ENCODE measurements at regions of chr10 and their contacts with region 1.

Region 1: GRCh38 chr10:100009793-100010676 is at the start of gene DNMBP:
- DNase-seq: peak; percentile 89 to 94 (median 91)
- ATAC-seq: peak; percentile 80 to 96 (median 94)
- H3K4me3 ChIP-seq: peak within 1 kb of the TSS; percentile 62 to 99 (median 84)
- H3K27ac ChIP-seq: peak within 1 kb of the TSS; percentile 55 to 92 (median 84)
- H3K4me1 ChIP-seq: peaks cover 0 to 52% (median 32%) of the 10 kb centered on the region in 12 donors
- H3K27me3 ChIP-seq: no peaks in the 10 kb centered on the region
- CTCF ChIP-seq: peak; percentile 28 to 68 (median 55)
- POLR2A ChIP-seq: peak in 1 of 2 donors; percentile 48
- total RNA-seq, gene DNMBP: 3.9 to 11.5 (median 7.2) TPM

Region 2: GRCh38 chr10:99854860-99855259 is 155.2 kb before region 1 on chr10:
- intact Hi-C with region 1: loop called in 3 of 10 experiments (anchors 2 to 10 kb)
- DNase-seq: peak in 1 of 5 donors; percentile 20
- ATAC-seq: peak in 3 of 4 donors; percentile 62 to 75 (median 73)
- H3K4me3 ChIP-seq: no peak overlapping the region
- H3K27ac ChIP-seq: no peak overlapping the region
- H3K4me1 ChIP-seq: no peaks in the 10 kb centered on the region
- H3K27me3 ChIP-seq: no peaks in the 10 kb centered on the region
- CTCF ChIP-seq: peak; percentile 5 to 67 (median 48)
- POLR2A ChIP-seq: no peak

Region 3: DNA sequence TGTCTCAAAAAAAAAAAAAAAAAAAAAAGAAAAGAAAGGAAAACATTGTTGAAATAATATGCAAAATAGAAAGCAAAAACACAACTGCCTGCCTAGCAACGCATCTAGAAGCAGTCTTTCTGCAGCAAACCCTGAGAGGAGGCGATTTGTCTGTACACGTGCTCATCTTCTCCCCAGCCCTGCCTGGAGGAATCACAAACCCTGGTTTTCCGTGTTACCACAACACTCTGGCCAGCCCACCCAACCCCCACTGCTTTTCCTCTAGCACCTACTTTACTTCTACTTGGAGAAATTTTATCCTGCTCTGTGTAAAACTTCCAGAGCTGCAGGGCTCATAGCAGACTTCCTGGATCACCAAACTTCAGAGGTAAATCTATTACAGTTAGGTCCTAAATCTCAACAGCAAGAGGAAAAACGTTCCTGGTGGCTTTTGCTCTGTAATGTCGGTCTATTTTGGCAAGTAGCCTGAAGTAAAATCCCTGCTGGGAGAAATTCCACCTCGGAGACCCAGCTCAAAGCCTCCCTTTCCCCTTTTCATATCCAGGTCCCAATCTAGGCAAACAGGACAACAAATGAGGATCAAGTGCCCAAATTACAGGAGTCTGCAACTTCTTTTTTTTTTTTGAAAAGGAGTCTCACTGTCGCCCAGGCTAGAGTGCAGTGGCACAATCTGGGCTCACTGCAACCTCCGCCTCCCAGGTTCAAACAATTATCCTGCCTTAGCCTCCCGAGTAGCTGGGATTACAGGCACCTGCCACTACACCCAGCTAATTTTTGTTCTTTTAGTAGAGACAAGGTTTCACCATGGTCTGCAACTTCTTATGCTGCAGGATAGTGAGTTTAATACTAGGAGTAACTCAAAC is 91.8 kb before region 1 on chr10:
- intact Hi-C with region 1: loop called in 6 of 10 experiments (anchors 5 to 10 kb)
- DNase-seq: peak in 3 of 5 donors; percentile 28 to 42 (median 34)
- ATAC-seq: peak; percentile 59 to 71 (median 64)
- H3K4me3 ChIP-seq: peak overlapping the region in 10 of 12 donors; percentile 3 to 49 (median 41)
- H3K27ac ChIP-seq: peak overlapping the region; percentile 2 to 76 (median 47)
- H3K4me1 ChIP-seq: peaks cover 0 to 31% (median 14%) of the 10 kb centered on the region in 12 donors
- H3K27me3 ChIP-seq: no peaks in the 10 kb centered on the region
- CTCF ChIP-seq: no peak
- POLR2A ChIP-seq: no peak

Region 4: DNA sequence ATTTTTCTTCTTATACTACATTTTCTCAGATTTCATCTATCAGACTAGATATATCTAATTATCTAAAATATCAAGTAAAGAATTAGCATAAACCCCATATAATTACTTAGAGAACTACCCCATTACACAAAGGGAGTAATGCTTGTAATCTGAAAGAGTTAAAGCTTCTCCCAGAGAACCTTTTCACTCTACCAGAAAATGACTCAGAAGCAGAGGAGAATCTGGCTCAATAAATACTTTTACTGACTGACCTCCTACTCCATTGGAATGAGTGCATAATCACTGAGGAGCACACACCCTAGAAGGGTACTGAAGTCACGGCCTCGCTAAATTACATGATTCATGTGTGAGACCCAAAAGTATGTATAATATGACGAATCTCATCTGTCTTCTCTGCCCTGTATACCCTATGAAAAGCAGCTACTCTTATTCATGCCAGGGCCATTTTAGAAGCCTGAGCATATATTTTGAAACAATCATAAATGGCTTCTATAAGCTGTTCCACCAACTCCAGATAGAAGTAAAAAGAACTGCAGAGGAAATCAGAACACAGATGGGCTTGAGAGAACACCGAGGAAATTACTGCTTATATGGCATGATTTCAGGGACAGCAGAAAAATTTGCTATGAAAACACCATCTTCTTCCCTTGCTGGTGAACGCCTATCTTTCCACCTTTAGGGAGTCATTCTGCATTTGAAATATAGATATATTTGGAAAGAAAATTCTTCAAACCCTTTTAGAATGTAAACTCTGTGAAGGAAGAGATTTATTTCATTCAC is 33.0 kb before region 1 on chr10:
- intact Hi-C with region 1: loop called in 2 of 10 experiments (anchors 2 to 5 kb)
- DNase-seq: no peak
- ATAC-seq: peak; percentile 52 to 93 (median 86)
- H3K4me3 ChIP-seq: peak overlapping the region in 1 of 12 donors; percentile 7
- H3K27ac ChIP-seq: peak overlapping the region; percentile 47 to 80 (median 69)
- H3K4me1 ChIP-seq: peaks cover 0 to 59% (median 41%) of the 10 kb centered on the region in 12 donors
- H3K27me3 ChIP-seq: no peaks in the 10 kb centered on the region
- CTCF ChIP-seq: no peak
- POLR2A ChIP-seq: no peak

Region 5: GRCh38 chr10:100148353-100149211 is 138.5 kb after region 1 on chr10:
- intact Hi-C with region 1: no loop called
- DNase-seq: no peak
- ATAC-seq: peak in 1 of 4 donors; percentile 49
- H3K4me3 ChIP-seq: no peak overlapping the region
- H3K27ac ChIP-seq: no peak overlapping the region
- H3K4me1 ChIP-seq: peaks cover 0 to 5% (median 0%) of the 10 kb centered on the region in 12 donors
- H3K27me3 ChIP-seq: no peaks in the 10 kb centered on the region
- CTCF ChIP-seq: no peak
- POLR2A ChIP-seq: no peak